ENCODE measurements at regions of chr5 and their contacts with region 1.

Region 1: DNA sequence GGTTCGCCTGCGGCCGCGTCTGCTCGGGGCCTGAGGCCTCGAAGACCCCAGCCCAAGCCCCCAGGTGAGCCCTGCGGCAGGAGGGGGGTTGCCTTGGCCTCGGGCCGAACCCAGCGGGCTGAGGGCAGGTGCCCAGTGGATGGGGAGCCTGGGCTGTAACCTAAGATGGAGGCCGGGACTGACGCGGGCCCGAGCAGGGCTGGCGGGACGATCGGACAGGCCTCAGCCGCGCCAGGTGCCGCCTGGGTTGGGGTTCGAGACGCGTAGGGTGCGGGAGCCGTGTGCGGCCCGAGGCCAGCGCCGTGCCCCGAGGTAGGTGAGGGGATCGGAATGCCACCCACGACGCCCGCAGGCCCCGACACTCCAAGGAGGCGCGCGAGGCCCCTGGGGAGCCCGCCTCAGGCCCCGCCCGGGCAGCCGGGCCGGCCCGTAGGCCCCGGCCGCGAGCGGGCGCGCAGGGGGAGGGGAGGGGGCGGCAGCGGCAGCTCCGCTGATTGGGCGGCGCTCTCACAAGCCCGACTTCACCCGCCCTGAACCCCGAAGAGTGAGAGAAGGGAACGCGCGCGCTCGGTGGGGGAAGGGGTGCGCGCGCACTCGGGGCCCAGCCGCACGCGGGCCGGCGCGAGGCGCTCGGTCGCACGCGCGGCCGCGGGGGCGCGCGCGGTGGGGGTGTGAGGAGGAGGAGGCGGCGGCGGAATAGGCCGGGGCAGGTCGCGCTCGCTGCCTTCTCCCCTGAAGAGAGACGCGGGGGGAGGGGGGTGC is at the start of gene NSD1:
- DNase-seq: peak; percentile 81 to 96 (median 89)
- ATAC-seq: peak; percentile 72
- H3K4me3 ChIP-seq: peak within 1 kb of the TSS; percentile 58 to 60
- H3K4me3 Mint-ChIP-seq: peak within 1 kb of the TSS; percentile 85
- H3K27ac ChIP-seq: peak within 1 kb of the TSS; percentile 64 to 85
- H3K27ac Mint-ChIP-seq: peak within 1 kb of the TSS; percentile 90
- H3K4me1 ChIP-seq: peaks cover 54% of the 10 kb centered on the region
- H3K4me1 Mint-ChIP-seq: peaks cover 55% of the 10 kb centered on the region
- H3K27me3 ChIP-seq: no peaks in the 10 kb centered on the region
- H3K27me3 Mint-ChIP-seq: no peaks in the 10 kb centered on the region
- CTCF ChIP-seq: no peak
- total RNA-seq, gene NSD1: 71.8 to 75.2 TPM

Region 2: GRCh38 chr5:176985516-176985915 is 147.8 kb before region 1 on chr5:
- CTCF ChIA-PET with region 1: no interaction called
- POLR2A ChIA-PET with region 1: no interaction called
- intact Hi-C with region 1: no loop called
- DNase-seq: peak; percentile 5 to 67 (median 45)
- ATAC-seq: peak; percentile 97
- H3K4me3 ChIP-seq: no peak overlapping the region
- H3K4me3 Mint-ChIP-seq: no peak overlapping the region
- H3K27ac ChIP-seq: no peak overlapping the region
- H3K27ac Mint-ChIP-seq: peak overlapping the region; percentile 89
- H3K4me1 ChIP-seq: peaks cover 17% of the 10 kb centered on the region
- H3K4me1 Mint-ChIP-seq: peaks cover 37% of the 10 kb centered on the region
- H3K27me3 ChIP-seq: no peaks in the 10 kb centered on the region
- H3K27me3 Mint-ChIP-seq: no peaks in the 10 kb centered on the region
- CTCF ChIP-seq: no peak

Region 3: GRCh38 chr5:177303121-177303924 is 170.1 kb after region 1 on chr5 and contains the starts of genes PRELID1 and RAB24:
- CTCF ChIA-PET with region 1: no interaction called
- POLR2A ChIA-PET with region 1: interaction called, 3 read pairs
- intact Hi-C with region 1: loop called (anchors 5 kb)
- DNase-seq: peak; percentile 71 to 94 (median 88)
- ATAC-seq: peak; percentile 54
- H3K4me3 ChIP-seq: peak within 1 kb of the TSS; percentile 71 to 80
- H3K4me3 Mint-ChIP-seq: peak within 1 kb of the TSS; percentile 93
- H3K27ac ChIP-seq: peak within 1 kb of the TSS; percentile 71 to 78
- H3K27ac Mint-ChIP-seq: peak within 1 kb of the TSS; percentile 91
- H3K4me1 ChIP-seq: peaks cover 57% of the 10 kb centered on the region
- H3K4me1 Mint-ChIP-seq: peaks cover 65% of the 10 kb centered on the region
- H3K27me3 ChIP-seq: no peaks in the 10 kb centered on the region
- H3K27me3 Mint-ChIP-seq: no peaks in the 10 kb centered on the region
- CTCF ChIP-seq: no peak
- total RNA-seq, gene PRELID1: 15.5 to 23.7 TPM
- total RNA-seq, gene RAB24: 14.1 to 19.8 TPM

Region 4: GRCh38 chr5:177425801-177426565 is 292.7 kb after region 1 on chr5:
- CTCF ChIA-PET with region 1: no interaction called
- POLR2A ChIA-PET with region 1: no interaction called
- intact Hi-C with region 1: loop called in 1 of 2 experiments (anchors 5 kb)
- DNase-seq: peak; percentile 99 to 100 (median 99)
- ATAC-seq: peak; percentile 80
- H3K4me3 ChIP-seq: peak overlapping the region; percentile 63 to 65
- H3K4me3 Mint-ChIP-seq: peak overlapping the region; percentile 91
- H3K27ac ChIP-seq: peak overlapping the region; percentile 86 to 92
- H3K27ac Mint-ChIP-seq: peak overlapping the region; percentile 98
- H3K4me1 ChIP-seq: peaks cover 46% of the 10 kb centered on the region
- H3K4me1 Mint-ChIP-seq: peaks cover 53% of the 10 kb centered on the region
- H3K27me3 ChIP-seq: no peaks in the 10 kb centered on the region
- H3K27me3 Mint-ChIP-seq: no peaks in the 10 kb centered on the region
- CTCF ChIP-seq: no peak

Region 5: GRCh38 chr5:177599731-177600507 is 466.6 kb after region 1 on chr5 and contains the start of gene B4GALT7:
- CTCF ChIA-PET with region 1: no interaction called
- POLR2A ChIA-PET with region 1: no interaction called
- intact Hi-C with region 1: loop called in 1 of 2 experiments (anchors 5 kb)
- DNase-seq: peak; percentile 73 to 94 (median 82)
- ATAC-seq: peak; percentile 91
- H3K4me3 ChIP-seq: peak within 1 kb of the TSS; percentile 90 to 92
- H3K4me3 Mint-ChIP-seq: peak within 1 kb of the TSS; percentile 90
- H3K27ac ChIP-seq: peak within 1 kb of the TSS; percentile 65 to 78
- H3K27ac Mint-ChIP-seq: peak within 1 kb of the TSS; percentile 83
- H3K4me1 ChIP-seq: peaks cover 13% of the 10 kb centered on the region
- H3K4me1 Mint-ChIP-seq: peaks cover 29% of the 10 kb centered on the region
- H3K27me3 ChIP-seq: no peaks in the 10 kb centered on the region
- H3K27me3 Mint-ChIP-seq: no peaks in the 10 kb centered on the region
- CTCF ChIP-seq: no peak
- total RNA-seq, gene B4GALT7: 33.4 to 36.6 TPM